ENCODE measurements at regions of chr10 and their contacts with region 1.

Region 1: GRCh38 chr10:45672181-45673073 is at the start of gene ZFAND4:
- DNase-seq: peak; percentile 85 to 98
- H3K4me3 ChIP-seq: peak within 1 kb of the TSS; percentile 72 to 78
- H3K27ac ChIP-seq: peak within 1 kb of the TSS; percentile 86 to 89
- H3K4me1 ChIP-seq: peaks cover 0 to 3% of the 10 kb centered on the region in 2 donors
- H3K27me3 ChIP-seq: no peaks in the 10 kb centered on the region
- CTCF ChIP-seq: peak; percentile 27 to 76 (median 34)
- total RNA-seq, gene ZFAND4: 17.1 TPM

Region 2: DNA sequence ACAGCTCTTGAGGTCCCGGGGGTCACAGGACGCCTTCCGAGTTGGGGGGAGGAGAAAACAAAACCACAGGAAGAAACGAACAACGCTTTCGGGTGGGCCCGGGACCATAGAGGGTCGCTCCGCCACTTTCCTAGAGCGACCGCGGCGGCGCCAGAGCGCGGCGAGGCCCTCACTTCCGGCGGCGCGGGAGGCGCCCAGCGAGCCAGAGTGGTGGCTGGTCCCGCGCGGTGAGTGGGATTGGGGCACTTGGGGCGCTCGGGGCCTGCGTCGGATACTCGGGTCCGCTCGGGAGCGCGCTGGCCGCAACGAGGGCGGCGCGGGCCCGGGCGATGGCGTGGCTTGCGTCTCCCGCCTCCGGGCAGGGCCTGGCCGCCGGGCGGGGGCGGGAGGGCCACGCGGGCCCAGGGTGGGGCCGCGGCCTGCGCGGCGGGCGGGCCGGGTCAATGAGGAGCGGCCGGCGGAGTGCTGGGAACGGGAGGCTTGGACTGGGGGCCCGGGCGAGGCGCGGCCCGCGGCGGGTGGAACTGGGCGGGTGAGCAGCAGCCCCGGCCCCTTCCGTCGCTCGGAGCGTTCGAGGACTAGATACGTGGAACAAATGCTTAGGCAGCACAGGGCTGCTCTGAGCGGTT is 671.6 kb before region 1 on chr10 and contains the start of gene ZNF22:
- intact Hi-C with region 1: loop called (anchors 5 kb)
- DNase-seq: no peak
- H3K4me3 ChIP-seq: peak within 1 kb of the TSS; percentile 74
- H3K27ac ChIP-seq: peak within 1 kb of the TSS; percentile 90 to 93
- H3K4me1 ChIP-seq: peaks cover 3 to 44% of the 10 kb centered on the region in 2 donors
- H3K27me3 ChIP-seq: no peaks in the 10 kb centered on the region
- CTCF ChIP-seq: peak in 1 of 3 experiments; percentile 30
- total RNA-seq, gene ZNF22: 1.6 TPM

Region 3: GRCh38 chr10:45180946-45181875 is 491.2 kb before region 1 on chr10:
- intact Hi-C with region 1: loop called (anchors 5 kb)
- DNase-seq: peak in 1 of 2 donors; percentile 72
- H3K4me3 ChIP-seq: peak overlapping the region in 1 of 2 donors; percentile 9
- H3K27ac ChIP-seq: peak overlapping the region; percentile 70
- H3K4me1 ChIP-seq: peaks cover 0 to 13% of the 10 kb centered on the region in 2 donors
- H3K27me3 ChIP-seq: no peaks in the 10 kb centered on the region
- CTCF ChIP-seq: no peak

Region 4: GRCh38 chr10:45249978-45250693 is 422.3 kb before region 1 on chr10:
- intact Hi-C with region 1: loop called (anchors 5 kb)
- DNase-seq: no peak
- H3K4me3 ChIP-seq: no peak overlapping the region
- H3K27ac ChIP-seq: no peak overlapping the region
- H3K4me1 ChIP-seq: no peaks in the 10 kb centered on the region
- H3K27me3 ChIP-seq: no peaks in the 10 kb centered on the region
- CTCF ChIP-seq: peak; percentile 32 to 70 (median 46)

Region 5: DNA sequence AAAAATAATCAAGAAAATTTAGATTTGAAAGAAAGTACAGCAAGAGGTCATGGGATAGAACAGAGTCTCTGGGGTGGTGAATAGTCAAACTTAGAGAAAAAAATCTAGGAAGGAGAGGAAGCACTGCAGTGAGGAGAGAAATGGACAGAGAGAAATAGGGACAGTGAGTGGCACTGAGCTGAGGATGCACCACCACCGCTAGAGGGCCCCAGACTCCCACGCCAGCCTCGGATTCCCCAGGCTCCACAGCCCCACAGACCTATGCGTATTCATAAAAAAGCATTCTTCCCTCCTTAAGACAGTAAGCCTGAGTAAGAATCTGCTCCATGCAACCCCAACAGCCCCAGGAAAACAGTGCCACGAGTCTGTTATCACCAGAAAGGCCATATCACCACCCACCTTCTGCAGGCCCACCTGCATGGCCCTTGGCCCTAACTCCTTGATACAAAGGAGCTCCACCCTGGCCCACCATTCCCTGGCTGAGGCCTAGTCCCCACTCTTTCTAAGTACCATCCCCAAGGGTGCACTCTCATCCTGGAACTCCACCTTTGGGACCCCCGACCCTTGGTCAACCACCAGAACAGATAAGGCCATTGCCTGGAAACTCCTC is 207.4 kb before region 1 on chr10:
- intact Hi-C with region 1: loop called (anchors 1 kb)
- DNase-seq: no peak
- H3K4me3 ChIP-seq: no peak overlapping the region
- H3K27ac ChIP-seq: no peak overlapping the region
- H3K4me1 ChIP-seq: no peaks in the 10 kb centered on the region
- H3K27me3 ChIP-seq: no peaks in the 10 kb centered on the region
- CTCF ChIP-seq: peak; percentile 49 to 84 (median 73)

Region 6: GRCh38 chr10:45594276-45595106 is 77.9 kb before region 1 on chr10:
- intact Hi-C with region 1: loop called (anchors 1 kb)
- DNase-seq: peak; percentile 38 to 96
- H3K4me3 ChIP-seq: peak overlapping the region; percentile 82 to 92
- H3K27ac ChIP-seq: peak overlapping the region; percentile 36 to 71
- H3K4me1 ChIP-seq: peaks cover 0 to 16% of the 10 kb centered on the region in 2 donors
- H3K27me3 ChIP-seq: no peaks in the 10 kb centered on the region
- CTCF ChIP-seq: peak in 1 of 3 experiments; percentile 19

Region 7: DNA sequence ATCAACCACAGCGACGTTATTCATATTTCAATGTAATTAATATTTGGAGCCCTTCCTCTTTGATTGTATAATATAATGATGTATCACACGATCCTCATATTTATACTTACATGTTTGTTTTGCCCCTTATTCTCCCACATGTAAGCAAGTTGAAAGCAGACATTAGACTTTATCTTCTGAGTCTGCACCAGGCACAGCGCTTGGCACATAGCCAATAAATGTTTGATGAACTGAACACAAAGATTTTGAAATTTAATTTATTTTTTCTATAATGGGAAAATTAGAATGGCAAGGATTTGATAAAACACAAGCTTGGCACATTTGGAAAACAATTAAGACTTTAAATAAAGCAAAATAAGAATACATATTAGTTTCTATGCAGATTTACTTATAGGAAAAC is 31.5 kb before region 1 on chr10:
- intact Hi-C with region 1: no loop called
- DNase-seq: no peak
- H3K4me3 ChIP-seq: no peak overlapping the region
- H3K27ac ChIP-seq: no peak overlapping the region
- H3K4me1 ChIP-seq: no peaks in the 10 kb centered on the region
- H3K27me3 ChIP-seq: no peaks in the 10 kb centered on the region
- CTCF ChIP-seq: no peak

Region 8: DNA sequence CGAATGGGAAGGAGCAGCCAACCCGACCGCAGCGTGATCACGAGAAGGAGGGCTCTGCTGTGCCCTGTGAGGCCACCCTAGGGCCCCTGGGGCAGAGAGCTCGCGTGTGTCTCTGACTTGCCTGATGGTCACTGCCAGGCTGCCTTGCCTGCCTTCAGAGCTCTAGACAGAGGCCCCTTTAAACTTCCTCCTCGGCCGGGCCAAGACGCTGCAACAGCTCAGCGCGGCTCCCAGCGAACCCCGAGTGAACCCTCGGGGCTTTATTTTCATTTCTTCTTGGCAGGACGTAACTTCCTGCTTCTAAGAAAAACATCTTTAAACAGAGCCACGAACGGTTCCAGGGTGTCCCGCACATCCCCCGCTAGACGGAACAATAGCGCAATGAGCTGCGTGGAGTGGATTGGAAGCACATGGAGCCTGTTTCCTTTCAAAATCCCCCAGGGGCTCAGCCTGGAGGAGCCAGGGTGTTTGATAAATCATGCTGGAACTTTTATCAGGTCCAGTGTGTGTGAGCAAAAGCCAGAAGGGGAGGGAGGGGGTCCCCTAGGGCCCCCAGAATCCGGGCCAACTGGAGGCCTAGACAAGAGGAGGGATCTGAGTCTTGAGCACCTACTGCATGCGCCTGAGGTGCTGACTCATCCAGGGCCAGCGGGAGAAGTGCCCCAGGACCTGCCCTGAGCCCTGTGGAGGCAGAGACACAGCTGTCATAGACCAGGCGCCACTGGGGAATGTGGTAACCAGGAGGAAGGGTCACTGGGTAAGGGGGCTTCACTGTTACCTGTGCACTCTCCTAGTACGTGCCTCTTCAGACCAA is 1493.5 kb after region 1 on chr10:
- intact Hi-C with region 1: loop called (anchors 5 kb)
- DNase-seq: peak; percentile 51 to 90
- H3K4me3 ChIP-seq: peak overlapping the region; percentile 29 to 49
- H3K27ac ChIP-seq: peak overlapping the region; percentile 90 to 93
- H3K4me1 ChIP-seq: peaks cover 4 to 25% of the 10 kb centered on the region in 2 donors
- H3K27me3 ChIP-seq: no peaks in the 10 kb centered on the region
- CTCF ChIP-seq: no peak

Measured in ascending aorta (tissue), 2 donors.